Activated CD4-positive, alpha-beta memory T cell treated with anti-CD3 and anti-CD28 coated beads for 36 hours (primary cell): ENCODE measurements at regions of chr10 and their contacts with region 1.

Region 1: GRCh38 chr10:12782537-12782936 is 219.0 kb downstream of the CCDC3 start:
- DNase-seq: peak; percentile 58
- H3K4me3 Mint-ChIP-seq: no peak overlapping the region
- H3K27ac Mint-ChIP-seq: no peak overlapping the region
- H3K4me1 Mint-ChIP-seq: peaks cover 45% of the 10 kb centered on the region
- H3K27me3 Mint-ChIP-seq: no peaks in the 10 kb centered on the region

Region 2: DNA sequence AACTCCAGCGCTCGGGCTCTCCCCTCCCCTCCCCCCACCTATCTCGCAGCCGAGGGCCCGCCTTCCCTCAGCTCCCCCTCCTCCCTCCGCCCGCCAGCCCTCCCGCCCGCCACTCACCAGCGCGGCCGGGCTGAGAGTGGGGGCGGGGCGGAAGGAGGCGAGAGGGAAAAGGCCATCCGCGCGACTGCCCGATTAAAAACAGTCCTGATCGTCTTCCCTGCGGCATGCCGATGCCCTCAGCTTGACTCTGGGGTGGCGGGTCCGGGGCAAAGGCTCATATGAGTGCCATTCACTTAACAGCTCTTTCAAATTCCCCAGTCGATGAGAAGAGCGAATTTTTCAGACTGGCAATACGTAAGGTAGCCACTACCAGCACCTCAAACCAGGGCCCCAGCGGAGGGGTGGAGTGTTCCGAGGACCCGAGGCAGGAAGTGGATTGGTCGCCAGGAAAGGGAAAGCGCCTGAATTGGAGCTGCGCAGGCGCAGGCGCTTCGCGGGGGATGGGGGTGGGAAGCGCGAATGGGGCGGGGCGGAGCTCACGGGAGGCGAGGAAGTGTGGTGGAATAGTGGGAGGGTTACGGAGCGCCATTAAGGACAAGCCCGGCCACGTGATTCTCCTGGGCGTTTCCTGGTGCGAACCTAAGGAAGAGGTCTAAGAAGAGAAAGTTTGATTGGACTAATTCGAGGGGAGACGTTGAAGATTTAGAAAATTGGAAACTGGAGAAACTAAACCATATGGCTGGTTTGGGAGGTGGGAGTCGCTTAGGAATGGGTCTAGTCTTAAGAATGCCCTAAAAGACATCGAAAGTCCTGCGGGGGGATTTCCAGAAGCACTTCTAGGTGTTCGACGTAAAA is 739.5 kb before region 1 on chr10 and contains the start of gene UPF2:
- CTCF ChIA-PET with region 1: no interaction called
- POLR2A ChIA-PET with region 1: no interaction called
- intact Hi-C with region 1: loop called (anchors 2 kb)
- DNase-seq: peak; percentile 99
- H3K4me3 Mint-ChIP-seq: peak within 1 kb of the TSS; percentile 100
- H3K27ac Mint-ChIP-seq: peak within 1 kb of the TSS; percentile 98
- H3K4me1 Mint-ChIP-seq: peaks cover 32% of the 10 kb centered on the region
- H3K27me3 Mint-ChIP-seq: no peaks in the 10 kb centered on the region
- total RNA-seq, gene UPF2: 29.5 to 32.0 TPM

Region 3: DNA sequence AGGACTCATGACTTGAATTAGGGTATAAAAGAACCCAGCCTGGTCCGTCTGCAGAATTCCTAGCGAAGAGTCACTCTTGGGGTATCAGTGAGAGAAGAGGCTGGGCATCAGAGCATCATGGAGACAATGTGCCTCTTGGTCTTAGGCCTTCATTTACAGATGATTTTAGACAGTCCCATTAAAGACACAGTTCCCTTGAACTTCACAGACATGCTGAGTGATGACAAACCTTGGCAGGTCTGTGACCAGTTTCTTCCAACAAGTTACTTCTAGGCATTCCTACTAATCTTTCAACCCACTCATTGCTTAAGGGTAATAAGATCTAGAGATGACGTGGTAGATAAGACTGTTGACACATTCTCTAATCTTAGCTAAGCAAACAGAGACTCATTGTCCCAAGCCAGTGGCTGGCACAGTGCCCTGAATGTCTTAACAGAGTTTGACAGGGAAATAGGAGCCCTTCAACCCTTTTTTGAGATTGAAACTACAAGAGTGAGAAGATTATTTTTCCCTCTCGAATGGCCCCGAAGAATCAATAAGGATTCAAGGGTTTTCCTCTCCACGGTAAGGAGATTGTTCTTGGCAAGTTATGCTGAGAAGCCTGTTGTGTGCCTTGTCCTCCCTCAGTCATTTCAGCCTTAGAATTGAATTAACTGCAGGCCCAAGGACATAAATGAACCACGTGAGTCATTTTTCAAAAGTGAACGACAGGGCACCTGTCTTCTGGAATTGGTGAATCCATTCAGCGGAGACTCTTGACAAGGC is 62.1 kb before region 1 on chr10:
- CTCF ChIA-PET with region 1: interaction called, 3 read pairs
- POLR2A ChIA-PET with region 1: interaction called, 7 read pairs
- intact Hi-C with region 1: loop called (anchors 1 kb)
- DNase-seq: peak; percentile 81
- H3K4me3 Mint-ChIP-seq: no peak overlapping the region
- H3K27ac Mint-ChIP-seq: peak overlapping the region; percentile 82
- H3K4me1 Mint-ChIP-seq: peaks cover 37% of the 10 kb centered on the region
- H3K27me3 Mint-ChIP-seq: no peaks in the 10 kb centered on the region

Region 4: GRCh38 chr10:12757351-12757750 is 25.2 kb before region 1 on chr10:
- CTCF ChIA-PET with region 1: interaction called, 12 read pairs
- POLR2A ChIA-PET with region 1: no interaction called
- intact Hi-C with region 1: no loop called
- DNase-seq: peak; percentile 15
- H3K4me3 Mint-ChIP-seq: no peak overlapping the region
- H3K27ac Mint-ChIP-seq: no peak overlapping the region
- H3K4me1 Mint-ChIP-seq: no peaks in the 10 kb centered on the region
- H3K27me3 Mint-ChIP-seq: no peaks in the 10 kb centered on the region

Region 5: GRCh38 chr10:13074561-13075451 is 292.3 kb after region 1 on chr10:
- CTCF ChIA-PET with region 1: interaction called, 12 read pairs
- POLR2A ChIA-PET with region 1: no interaction called
- intact Hi-C with region 1: no loop called
- DNase-seq: peak; percentile 80
- H3K4me3 Mint-ChIP-seq: no peak overlapping the region
- H3K27ac Mint-ChIP-seq: no peak overlapping the region
- H3K4me1 Mint-ChIP-seq: peaks cover 3% of the 10 kb centered on the region
- H3K27me3 Mint-ChIP-seq: peaks cover 17% of the 10 kb centered on the region